ENCODE measurements at regions of chr11 and their contacts with region 1.

Region 1: GRCh38 chr11:34624069-34624468 is 3.2 kb downstream of the EHF start:
- DNase-seq: peak; percentile 38
- ATAC-seq: peak; percentile 97
- H3K4me3 ChIP-seq: peak overlapping the region; percentile 20; the same call in 1 of the 2 replicates
- H3K27ac ChIP-seq: no peak overlapping the region
- H3K4me1 ChIP-seq: peaks cover 13% of the 10 kb centered on the region
- H3K27me3 ChIP-seq: peaks cover 0 to 3% of the 10 kb centered on the region in 2 experiments
- CTCF ChIP-seq: no peak
- EP300 ChIP-seq: no peak
- POLR2A ChIP-seq: no peak
- RAD21 ChIP-seq: no peak

Region 2: GRCh38 chr11:34653826-34654490 is 29.9 kb after region 1 on chr11:
- CTCF ChIA-PET with region 1: no interaction called
- POLR2A ChIA-PET with region 1: no interaction called
- RAD21 ChIA-PET with region 1: no interaction called
- SMC1A ChIA-PET with region 1: interaction called, 4 read pairs
- in situ Hi-C with region 1: no loop called
- intact Hi-C with region 1: loop called (anchors 2 kb)
- DNase-seq: no peak
- ATAC-seq: no peak
- H3K4me3 ChIP-seq: no peak overlapping the region
- H3K27ac ChIP-seq: no peak overlapping the region
- H3K4me1 ChIP-seq: peaks cover 41% of the 10 kb centered on the region
- H3K27me3 ChIP-seq: no peaks in the 10 kb centered on the region
- CTCF ChIP-seq: no peak
- EP300 ChIP-seq: no peak
- POLR2A ChIP-seq: no peak
- RAD21 ChIP-seq: no peak; the same call in 1 of the 2 replicates

Region 3: DNA sequence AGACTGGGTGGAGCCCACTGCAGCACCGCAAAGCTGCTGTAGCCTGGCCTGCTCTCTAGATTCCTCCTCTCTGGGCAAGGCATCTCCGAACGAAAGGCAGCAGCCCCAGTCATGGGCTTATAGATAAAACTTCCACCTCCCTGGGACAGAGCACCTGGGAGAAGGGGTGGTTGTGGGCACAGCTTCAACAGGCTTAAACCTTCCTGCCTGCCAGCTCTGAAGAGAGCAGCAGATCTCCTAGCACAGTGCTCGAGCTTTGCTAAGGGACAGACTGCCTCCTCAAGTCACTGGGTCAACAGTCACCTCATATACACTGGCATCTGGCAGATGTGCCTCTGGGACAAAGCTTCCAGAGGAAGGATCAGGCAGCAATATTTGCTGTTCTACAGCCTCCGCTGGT is 114.2 kb after region 1 on chr11:
- CTCF ChIA-PET with region 1: no interaction called
- POLR2A ChIA-PET with region 1: no interaction called
- RAD21 ChIA-PET with region 1: no interaction called
- SMC1A ChIA-PET with region 1: no interaction called
- in situ Hi-C with region 1: no loop called
- intact Hi-C with region 1: no loop called
- DNase-seq: no peak
- ATAC-seq: no peak
- H3K4me3 ChIP-seq: no peak overlapping the region
- H3K27ac ChIP-seq: no peak overlapping the region
- H3K4me1 ChIP-seq: no peaks in the 10 kb centered on the region
- H3K27me3 ChIP-seq: no peaks in the 10 kb centered on the region; a peak in 1 of 4 replicates
- CTCF ChIP-seq: no peak
- EP300 ChIP-seq: no peak
- POLR2A ChIP-seq: no peak
- RAD21 ChIP-seq: no peak

Region 4: DNA sequence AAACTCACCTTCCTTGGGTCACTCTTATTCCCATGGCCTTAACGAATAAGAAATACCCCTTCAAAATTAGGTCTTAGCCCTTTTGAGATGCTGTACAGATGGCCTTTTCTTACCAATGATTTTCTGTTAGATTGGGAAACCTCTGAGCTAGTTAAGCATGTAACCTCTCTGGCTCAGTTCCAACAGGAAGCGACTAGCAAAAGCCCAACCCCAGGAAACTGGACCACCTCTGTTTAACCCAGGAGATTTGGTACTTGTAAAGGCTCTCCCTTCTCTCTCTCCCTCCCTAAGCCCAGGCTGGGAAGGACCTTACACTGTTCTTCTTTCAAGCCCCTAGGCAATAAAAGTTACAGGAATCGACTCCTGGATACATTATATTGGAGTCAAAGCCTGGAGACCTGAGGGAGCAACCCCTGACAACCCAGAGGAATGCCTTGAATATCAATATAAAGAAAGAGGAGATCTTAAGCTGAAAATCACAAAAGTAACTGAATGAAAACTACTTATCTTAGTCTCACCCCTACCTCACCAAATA is 280.4 kb after region 1 on chr11:
- CTCF ChIA-PET with region 1: no interaction called
- POLR2A ChIA-PET with region 1: no interaction called
- RAD21 ChIA-PET with region 1: no interaction called
- SMC1A ChIA-PET with region 1: no interaction called
- in situ Hi-C with region 1: no loop called
- intact Hi-C with region 1: no loop called
- DNase-seq: no peak
- ATAC-seq: no peak
- H3K4me3 ChIP-seq: no peak overlapping the region
- H3K27ac ChIP-seq: no peak overlapping the region
- H3K4me1 ChIP-seq: no peaks in the 10 kb centered on the region
- H3K27me3 ChIP-seq: no peaks in the 10 kb centered on the region
- CTCF ChIP-seq: no peak
- EP300 ChIP-seq: no peak
- POLR2A ChIP-seq: no peak
- RAD21 ChIP-seq: no peak

Measured in GM12878 (cell line).